ENCODE measurements at regions of chr2 and their contacts with region 1.

Region 1: GRCh38 chr2:207529330-207530159 is at the start of gene CREB1:
- DNase-seq: peak; percentile 100
- ATAC-seq: peak; percentile 77
- H3K4me3 ChIP-seq: peak within 1 kb of the TSS; percentile 89 to 98 (median 97)
- H3K4me3 Mint-ChIP-seq: peak within 1 kb of the TSS; percentile 93
- H3K27ac ChIP-seq: peak within 1 kb of the TSS; percentile 100
- H3K27ac Mint-ChIP-seq: peak within 1 kb of the TSS; percentile 98
- H3K4me1 ChIP-seq: peaks cover 70 to 73% of the 10 kb centered on the region in 2 donors
- H3K4me1 Mint-ChIP-seq: peaks cover 68% of the 10 kb centered on the region
- H3K27me3 ChIP-seq: no peaks in the 10 kb centered on the region
- H3K27me3 Mint-ChIP-seq: no peaks in the 10 kb centered on the region
- CTCF ChIP-seq: no peak
- total RNA-seq, gene CREB1: 149 and 156 TPM in 2 replicates

Region 2: GRCh38 chr2:206085742-206086445 is 1443.7 kb before region 1 on chr2 and contains the start of gene INO80D:
- CTCF ChIA-PET with region 1: no interaction called
- POLR2A ChIA-PET with region 1: interaction called, 3 read pairs
- intact Hi-C with region 1: loop called (anchors 10 kb)
- DNase-seq: peak; percentile 91
- ATAC-seq: peak; percentile 84
- H3K4me3 ChIP-seq: peak within 1 kb of the TSS; percentile 68 to 95 (median 88)
- H3K4me3 Mint-ChIP-seq: peak within 1 kb of the TSS; percentile 99
- H3K27ac ChIP-seq: peak within 1 kb of the TSS; percentile 96 to 97
- H3K27ac Mint-ChIP-seq: peak within 1 kb of the TSS; percentile 100
- H3K4me1 ChIP-seq: peaks cover 19% of the 10 kb centered on the region in 2 donors
- H3K4me1 Mint-ChIP-seq: peaks cover 43% of the 10 kb centered on the region
- H3K27me3 ChIP-seq: no peaks in the 10 kb centered on the region
- H3K27me3 Mint-ChIP-seq: no peaks in the 10 kb centered on the region
- CTCF ChIP-seq: peak; percentile 67
- total RNA-seq, gene INO80D: 61.2 and 69.1 TPM in 2 replicates

Region 3: GRCh38 chr2:207143215-207144172 is 386.1 kb before region 1 on chr2:
- CTCF ChIA-PET with region 1: interaction called, 3 read pairs
- POLR2A ChIA-PET with region 1: interaction called, 4 read pairs
- intact Hi-C with region 1: loop called (anchors 1 kb)
- DNase-seq: peak; percentile 86
- ATAC-seq: peak; percentile 77
- H3K4me3 ChIP-seq: peak overlapping the region; percentile 43 to 71 (median 56)
- H3K4me3 Mint-ChIP-seq: peak overlapping the region; percentile 89
- H3K27ac ChIP-seq: peak overlapping the region; percentile 93 to 99
- H3K27ac Mint-ChIP-seq: peak overlapping the region; percentile 94
- H3K4me1 ChIP-seq: peaks cover 57 to 62% of the 10 kb centered on the region in 2 donors
- H3K4me1 Mint-ChIP-seq: peaks cover 68% of the 10 kb centered on the region
- H3K27me3 ChIP-seq: no peaks in the 10 kb centered on the region
- H3K27me3 Mint-ChIP-seq: no peaks in the 10 kb centered on the region
- CTCF ChIP-seq: no peak

Region 4: DNA sequence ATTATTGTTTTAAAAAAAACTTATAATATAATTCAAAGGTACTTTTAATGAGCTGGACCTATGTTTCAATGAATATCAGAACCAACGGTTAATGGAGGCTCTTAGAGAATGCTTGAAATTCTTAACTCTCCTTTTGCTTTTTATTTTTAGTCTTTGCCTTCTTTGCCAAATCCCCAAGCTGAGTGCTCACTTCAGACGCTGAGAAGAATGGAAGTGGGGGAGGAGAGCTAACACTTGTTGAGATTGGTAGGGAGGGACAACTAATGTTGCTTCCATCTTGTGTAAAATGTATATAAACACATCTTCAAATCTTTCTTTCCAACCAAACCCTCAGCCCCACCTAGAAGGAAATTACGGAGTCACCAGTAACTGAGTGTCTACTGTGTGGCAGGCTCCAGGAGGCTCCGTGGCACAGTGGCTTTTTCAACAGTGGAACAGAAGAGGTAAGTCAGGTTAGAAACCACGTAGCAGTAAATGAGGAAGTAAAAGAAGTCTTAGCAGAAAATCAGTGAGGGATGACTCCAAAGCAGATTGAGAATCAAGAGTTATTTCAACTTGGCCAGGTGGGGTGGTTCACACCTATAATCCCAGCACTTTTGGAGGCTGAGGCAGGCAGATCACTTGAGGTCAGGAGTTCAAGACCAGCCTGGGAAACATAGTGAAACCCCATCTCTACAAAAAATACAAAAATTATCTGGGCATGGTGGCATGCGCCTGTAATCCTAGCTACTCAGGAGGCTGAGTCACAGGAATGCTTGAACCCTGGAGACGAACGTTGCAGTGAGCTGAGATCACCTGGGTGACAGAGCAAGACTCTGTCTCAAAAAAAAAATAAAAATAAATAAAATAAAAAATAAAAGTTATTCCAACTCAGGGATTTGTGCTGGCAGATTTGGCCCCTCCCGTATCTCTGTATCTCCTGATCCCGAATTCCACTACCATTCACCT is 44.8 kb before region 1 on chr2:
- CTCF ChIA-PET with region 1: interaction called, 3 read pairs
- POLR2A ChIA-PET with region 1: interaction called, 9 read pairs
- intact Hi-C with region 1: loop called (anchors 2 kb)
- DNase-seq: peak; percentile 77
- ATAC-seq: peak; percentile 90
- H3K4me3 ChIP-seq: no peak overlapping the region
- H3K4me3 Mint-ChIP-seq: peak overlapping the region; percentile 0
- H3K27ac ChIP-seq: peak overlapping the region; percentile 31 to 63
- H3K27ac Mint-ChIP-seq: peak overlapping the region; percentile 37
- H3K4me1 ChIP-seq: peaks cover 19 to 20% of the 10 kb centered on the region in 2 donors
- H3K4me1 Mint-ChIP-seq: peaks cover 30% of the 10 kb centered on the region
- H3K27me3 ChIP-seq: no peaks in the 10 kb centered on the region
- H3K27me3 Mint-ChIP-seq: no peaks in the 10 kb centered on the region
- CTCF ChIP-seq: no peak

Region 5: DNA sequence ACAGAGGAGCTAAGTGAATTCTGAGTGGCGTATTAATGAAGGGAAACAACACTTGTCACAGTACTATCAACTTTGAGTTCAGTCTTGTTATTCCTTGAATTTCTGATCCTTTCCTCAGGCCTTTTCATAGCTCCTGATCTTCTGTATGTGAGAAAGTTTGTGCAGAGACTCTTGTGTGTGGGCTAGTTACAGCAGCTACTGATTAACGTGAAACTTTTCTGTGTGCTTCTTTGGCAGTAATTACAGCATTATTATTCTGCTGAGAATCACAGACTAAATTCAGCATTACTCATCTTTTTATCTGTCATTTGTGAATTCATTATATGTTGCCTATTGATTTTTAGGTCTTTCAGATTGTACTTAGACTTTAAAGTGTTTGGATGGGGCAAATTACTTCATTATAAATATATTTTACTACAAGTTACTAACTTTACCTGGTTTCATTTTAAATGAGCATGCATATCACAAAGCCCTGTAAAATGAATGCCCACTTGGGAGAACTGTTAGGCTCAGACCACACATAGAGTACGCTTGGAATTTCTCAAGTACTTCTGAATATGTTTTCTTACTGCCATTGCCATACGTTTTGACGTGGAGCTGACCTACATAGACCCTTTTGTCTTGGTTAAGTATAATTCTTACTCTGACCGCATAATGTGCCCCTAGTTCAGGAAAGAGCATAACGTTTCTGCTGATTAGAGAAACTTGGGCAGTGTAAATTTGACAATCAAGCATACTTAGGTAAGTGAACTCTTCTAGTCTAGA is 36.4 kb after region 1 on chr2:
- CTCF ChIA-PET with region 1: no interaction called
- POLR2A ChIA-PET with region 1: interaction called, 6 read pairs
- intact Hi-C with region 1: loop called (anchors 5 kb)
- DNase-seq: no peak
- ATAC-seq: no peak
- H3K4me3 ChIP-seq: no peak overlapping the region
- H3K4me3 Mint-ChIP-seq: no peak overlapping the region
- H3K27ac ChIP-seq: peak overlapping the region in 1 of 2 donors; percentile 16
- H3K27ac Mint-ChIP-seq: no peak overlapping the region
- H3K4me1 ChIP-seq: no peaks in the 10 kb centered on the region
- H3K4me1 Mint-ChIP-seq: no peaks in the 10 kb centered on the region
- H3K27me3 ChIP-seq: no peaks in the 10 kb centered on the region
- H3K27me3 Mint-ChIP-seq: no peaks in the 10 kb centered on the region
- CTCF ChIP-seq: no peak

Region 6: DNA sequence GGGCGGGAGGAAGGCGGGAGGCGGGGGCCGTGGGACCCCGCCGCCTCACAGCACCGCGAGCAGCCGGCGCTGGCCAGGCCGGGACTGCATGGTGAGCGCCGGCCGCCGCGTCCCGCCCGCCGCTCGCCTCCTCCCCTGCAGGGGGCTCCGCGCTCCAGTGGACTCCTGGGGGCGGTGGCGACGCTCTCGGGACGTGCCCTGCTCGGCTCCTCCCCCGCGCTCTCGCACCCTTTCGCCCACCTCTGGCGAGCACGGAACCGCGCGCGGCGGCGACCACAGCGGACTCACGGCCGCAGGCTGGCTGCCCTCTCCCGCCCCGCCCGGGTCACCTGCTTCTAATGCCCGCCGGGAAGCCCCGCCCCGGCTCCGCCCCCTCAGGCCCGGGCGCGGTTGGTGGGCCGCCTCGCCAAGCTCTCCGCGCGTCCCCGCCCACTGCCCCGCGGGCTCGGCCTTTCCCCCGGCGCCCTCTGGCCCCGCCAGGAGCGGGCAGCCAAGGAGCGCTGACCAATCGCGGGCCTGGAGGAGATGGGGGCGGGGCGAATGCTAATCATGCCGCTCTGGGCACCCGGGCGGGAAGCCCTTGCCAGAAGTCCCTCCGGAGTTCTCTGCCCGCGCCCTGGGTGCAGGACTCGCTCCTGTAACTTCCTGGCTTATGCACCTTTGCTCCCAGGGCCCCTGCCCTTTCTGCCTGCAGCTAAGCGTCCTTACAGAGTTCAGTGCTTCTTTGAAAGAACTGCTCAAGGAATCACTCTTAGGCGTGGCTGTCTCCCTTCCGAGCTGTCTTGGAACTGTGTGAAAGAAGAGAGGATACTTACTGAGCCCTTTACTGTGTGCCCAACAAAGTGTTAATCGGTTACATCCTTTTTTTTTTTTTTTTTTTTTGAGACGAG is 240.3 kb after region 1 on chr2 and contains the start of gene FZD5:
- CTCF ChIA-PET with region 1: interaction called, 3 read pairs
- POLR2A ChIA-PET with region 1: no interaction called
- intact Hi-C with region 1: loop called (anchors 1 kb)
- DNase-seq: peak; percentile 89
- ATAC-seq: peak; percentile 88
- H3K4me3 ChIP-seq: peak within 1 kb of the TSS; percentile 55 to 87 (median 65)
- H3K4me3 Mint-ChIP-seq: peak within 1 kb of the TSS; percentile 89
- H3K27ac ChIP-seq: no peak within 1 kb of the TSS
- H3K27ac Mint-ChIP-seq: peak within 1 kb of the TSS; percentile 80
- H3K4me1 ChIP-seq: peaks cover 32 to 44% of the 10 kb centered on the region in 2 donors
- H3K4me1 Mint-ChIP-seq: peaks cover 36% of the 10 kb centered on the region
- H3K27me3 ChIP-seq: peaks cover 0 to 15% (median 4%) of the 10 kb centered on the region in 4 experiments
- H3K27me3 Mint-ChIP-seq: peaks cover 6% of the 10 kb centered on the region
- CTCF ChIP-seq: peak; percentile 33
- total RNA-seq, gene FZD5: 1.8 and 2.5 TPM in 2 replicates